Ovary (tissue), 10 donors: ENCODE measurements at regions of chr17 and their contacts with region 1.

Region 1: GRCh38 chr17:83196973-83197880 is 117.8 kb downstream of the METRNL start:
- DNase-seq: peak in 2 of 5 donors; percentile 12 to 31
- H3K4me3 ChIP-seq: no peak overlapping the region
- H3K27ac ChIP-seq: no peak overlapping the region
- H3K4me1 ChIP-seq: peaks cover 18% of the 10 kb centered on the region
- H3K27me3 ChIP-seq: no peaks in the 10 kb centered on the region
- CTCF ChIP-seq: no peak
- EP300 ChIP-seq: no peak
- POLR2A ChIP-seq: no peak

Region 2: GRCh38 chr17:83160443-83161297 is 36.6 kb before region 1 on chr17:
- intact Hi-C with region 1: loop called in 1 of 4 experiments (anchors 1 kb)
- DNase-seq: peak in 1 of 5 donors; percentile 33
- H3K4me3 ChIP-seq: no peak overlapping the region
- H3K27ac ChIP-seq: peak overlapping the region in 1 of 2 donors; percentile 62
- H3K4me1 ChIP-seq: peaks cover 11% of the 10 kb centered on the region
- H3K27me3 ChIP-seq: no peaks in the 10 kb centered on the region
- CTCF ChIP-seq: no peak
- EP300 ChIP-seq: no peak
- POLR2A ChIP-seq: no peak